ENCODE measurements at regions of chr10 and their contacts with region 1.

Region 1: GRCh38 chr10:44932517-44933450 is 21.6 kb downstream of the TMEM72 start:
- DNase-seq: peak; percentile 84
- H3K4me3 Mint-ChIP-seq: no peak overlapping the region
- H3K27ac Mint-ChIP-seq: no peak overlapping the region
- H3K4me1 Mint-ChIP-seq: peaks cover 8% of the 10 kb centered on the region
- H3K27me3 Mint-ChIP-seq: no peaks in the 10 kb centered on the region

Region 2: DNA sequence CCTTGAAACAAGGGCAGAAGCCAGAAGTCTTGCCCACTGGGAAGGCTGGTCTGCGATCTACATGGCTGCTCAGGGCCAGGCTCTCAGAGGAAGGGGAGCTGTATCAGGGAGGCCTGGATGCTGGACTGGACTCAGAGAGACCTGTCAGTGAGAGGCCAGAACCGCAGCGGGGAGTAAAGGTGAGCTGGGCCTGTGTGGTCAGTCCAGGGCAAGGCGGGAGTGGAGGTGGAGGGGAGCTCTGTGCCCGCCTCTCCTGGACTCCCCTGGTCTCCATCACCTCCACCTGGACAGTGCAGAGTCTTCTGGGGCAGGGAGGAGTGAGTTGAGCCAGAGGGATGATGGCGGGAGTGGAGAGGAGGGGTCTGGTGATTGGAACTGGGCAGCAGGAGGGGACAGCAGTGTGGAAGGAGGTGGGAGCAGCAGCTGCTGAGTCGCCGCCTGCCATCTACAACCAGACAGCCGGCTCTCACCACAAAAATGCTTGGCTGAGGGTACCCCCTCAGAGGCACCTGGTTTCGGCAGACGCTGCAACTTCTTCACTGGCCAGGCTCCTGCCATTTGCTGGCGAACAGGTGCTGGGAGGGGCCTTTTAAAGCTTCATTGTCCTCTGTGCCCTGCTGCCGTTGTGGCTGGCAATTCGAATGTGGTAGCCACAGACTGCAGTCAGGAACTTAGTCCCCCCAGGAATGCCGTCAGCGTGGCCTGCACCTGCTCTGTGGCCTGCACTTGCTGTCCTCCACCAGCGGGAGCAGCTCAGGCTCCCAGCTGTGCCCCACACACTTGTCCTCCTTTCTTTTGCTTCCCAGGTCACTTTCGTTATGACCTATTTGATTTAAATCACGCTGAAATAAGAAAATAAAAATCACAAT is 30.3 kb after region 1 on chr10:
- CTCF ChIA-PET with region 1: interaction called, 17 read pairs
- POLR2A ChIA-PET with region 1: no interaction called
- DNase-seq: no peak
- H3K4me3 Mint-ChIP-seq: no peak overlapping the region
- H3K27ac Mint-ChIP-seq: peak overlapping the region; percentile 4
- H3K4me1 Mint-ChIP-seq: peaks cover 22% of the 10 kb centered on the region
- H3K27me3 Mint-ChIP-seq: no peaks in the 10 kb centered on the region